ENCODE measurements at regions of chr2 and their contacts with region 1.

Region 1: DNA sequence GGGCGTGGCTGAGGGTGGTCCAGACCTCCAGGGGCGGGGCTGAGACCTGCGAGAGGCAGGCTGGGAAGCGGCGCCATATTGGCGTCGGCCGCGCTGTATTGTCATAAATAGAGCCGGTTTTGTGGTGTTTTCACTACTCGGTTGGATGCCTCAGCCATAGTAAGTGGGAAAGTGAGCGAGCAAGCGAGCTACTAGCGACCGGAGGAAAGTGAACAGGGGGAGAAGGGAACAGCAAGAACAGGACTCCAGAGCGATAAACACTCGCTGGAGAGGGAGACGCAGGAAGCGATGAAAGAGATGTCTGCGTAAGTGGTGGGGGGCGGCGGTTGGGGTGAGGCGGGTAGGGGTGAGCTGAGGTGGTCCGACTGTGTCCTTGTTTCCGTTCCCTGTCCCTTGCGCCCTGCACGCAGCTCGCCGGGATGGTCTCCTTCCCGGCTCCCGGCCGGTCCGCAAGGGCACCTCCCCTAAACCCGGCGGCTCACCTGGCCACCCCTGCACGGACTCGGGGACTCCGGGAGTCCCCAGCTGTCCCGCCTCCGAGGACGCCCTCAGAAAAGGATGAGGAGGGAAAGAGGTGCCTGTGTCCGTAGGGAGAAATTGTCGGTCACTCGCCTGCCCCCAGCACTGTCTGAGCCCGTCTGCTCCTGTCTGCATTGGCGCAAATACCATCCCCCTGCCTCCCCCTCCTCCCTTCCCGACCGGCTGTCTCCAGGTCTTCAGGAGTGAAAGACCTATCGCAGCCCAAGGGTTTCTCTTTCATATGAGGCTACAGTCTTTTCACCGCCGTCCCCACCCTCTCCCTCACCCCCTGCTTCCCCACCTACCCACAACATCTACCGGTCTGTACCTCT is at the start of gene PAPOLG:
- DNase-seq: peak; percentile 98
- H3K4me3 ChIP-seq: peak within 1 kb of the TSS; percentile 78 to 98 (median 88)
- H3K27ac ChIP-seq: peak within 1 kb of the TSS; percentile 86 to 95 (median 90)
- H3K4me1 ChIP-seq: peaks cover 0 to 26% (median 26%) of the 10 kb centered on the region in 4 donors
- H3K27me3 ChIP-seq: no peaks in the 10 kb centered on the region
- CTCF ChIP-seq: no peak
- EP300 ChIP-seq: no peak
- POLR2A ChIP-seq: peak; percentile 19
- total RNA-seq, gene PAPOLG: 11.9 to 16.0 (median 13.9) TPM

Region 2: DNA sequence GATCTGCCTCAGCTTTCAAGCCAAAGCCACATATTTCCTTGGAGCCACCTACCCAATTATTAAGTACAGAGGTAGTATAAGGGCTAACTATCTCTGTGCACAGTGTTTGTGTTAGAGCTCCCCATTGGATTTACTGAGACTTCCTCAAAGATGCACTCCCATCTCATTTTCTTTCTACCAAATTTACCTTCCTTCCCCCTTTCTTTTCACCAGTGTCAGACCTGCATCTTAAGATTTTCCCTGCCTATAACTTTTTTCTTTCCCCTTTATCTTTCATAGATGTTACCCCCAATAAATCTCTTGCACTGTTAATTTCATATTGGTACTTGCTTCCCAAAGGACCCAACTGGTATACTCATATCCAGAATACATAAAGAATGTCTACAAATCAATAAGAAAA is 119.1 kb after region 1 on chr2:
- intact Hi-C with region 1: loop called (anchors 5 kb)
- DNase-seq: no peak
- H3K4me3 ChIP-seq: no peak overlapping the region
- H3K27ac ChIP-seq: no peak overlapping the region
- H3K4me1 ChIP-seq: peaks cover 0 to 4% (median 2%) of the 10 kb centered on the region in 4 donors
- H3K27me3 ChIP-seq: no peaks in the 10 kb centered on the region
- CTCF ChIP-seq: no peak
- EP300 ChIP-seq: no peak
- POLR2A ChIP-seq: no peak

Measured in esophagus muscularis mucosa (tissue), 4 donors.